ENCODE measurements at regions of chr1 and their contacts with region 1.

Region 1: GRCh38 chr1:26102526-26102925 is 9.1 kb upstream of the PDIK1L start:
- DNase-seq: no peak
- H3K4me3 ChIP-seq: no peak overlapping the region
- CTCF ChIP-seq: no peak

Region 2: DNA sequence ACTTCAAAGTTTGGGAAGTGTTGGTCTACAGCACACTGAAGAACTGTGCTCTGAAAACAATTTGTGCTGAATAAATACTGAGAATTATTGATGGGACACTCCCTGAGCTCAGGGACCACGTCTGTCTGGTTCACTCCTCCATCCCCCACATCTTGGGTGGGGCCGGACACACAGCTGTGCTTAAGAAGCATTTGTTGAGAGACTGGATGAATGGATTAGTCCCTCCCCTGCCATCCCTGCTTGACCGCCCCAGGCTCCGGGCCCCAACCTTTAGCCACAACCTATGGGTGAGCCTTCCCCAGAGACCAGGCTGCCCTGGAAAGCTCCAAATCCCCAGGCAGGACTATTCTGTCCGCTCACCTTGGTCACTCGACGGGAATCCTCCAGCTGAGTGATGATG is 42.6 kb before region 1 on chr1:
- in situ Hi-C with region 1: loop called (anchors 5 kb)
- DNase-seq: no peak
- H3K4me3 ChIP-seq: no peak overlapping the region
- CTCF ChIP-seq: no peak

Region 3: DNA sequence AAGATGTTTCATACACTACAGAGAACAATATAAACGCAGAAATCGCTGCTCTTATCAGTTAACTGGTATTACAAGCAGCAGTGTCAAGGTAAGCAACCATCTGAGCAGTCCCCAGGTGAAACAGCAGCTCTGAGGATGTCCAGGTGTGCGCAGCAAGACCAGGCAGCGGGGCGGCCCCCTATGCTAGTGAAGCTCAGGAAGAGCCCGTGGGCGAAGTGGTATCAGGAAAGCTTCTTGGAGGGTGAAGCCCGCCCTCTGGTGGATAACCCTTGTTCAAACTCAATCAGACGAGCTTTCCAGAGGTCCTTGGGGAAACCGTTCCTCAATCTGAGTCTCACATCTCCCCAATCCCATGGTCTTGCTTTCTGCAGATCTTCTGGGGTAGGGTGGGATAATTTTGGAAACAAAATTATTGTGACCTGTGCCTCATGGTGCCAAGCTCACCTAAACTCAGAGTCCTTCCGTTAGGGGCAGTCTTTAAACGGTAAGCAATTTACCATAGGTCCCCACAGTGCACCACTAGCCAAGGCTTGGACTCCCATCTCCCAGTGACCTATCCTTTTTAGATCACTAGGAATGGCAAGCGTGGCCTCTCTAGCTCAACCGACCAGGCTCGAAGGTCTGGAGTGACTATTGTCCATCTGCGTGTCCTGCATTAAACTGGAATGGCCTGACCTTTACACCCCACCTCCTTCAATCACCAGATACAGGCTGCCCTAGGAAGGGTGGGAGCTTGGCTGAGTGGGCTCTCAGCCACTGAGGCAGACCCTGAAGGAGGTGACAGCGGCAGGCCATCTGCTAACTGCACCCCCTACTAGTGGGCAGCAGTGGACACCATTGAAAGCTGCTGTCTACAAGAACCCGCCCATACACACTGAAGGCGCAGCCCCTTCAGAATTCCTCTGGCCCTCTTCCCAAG is 42.8 kb after region 1 on chr1:
- in situ Hi-C with region 1: loop called (anchors 5 kb)
- DNase-seq: peak; percentile 75
- H3K4me3 ChIP-seq: no peak overlapping the region
- CTCF ChIP-seq: peak; percentile 79

Measured in astrocyte of the cerebellum (primary cell).